Endothelial cell of umbilical vein (primary cell): ENCODE measurements at regions of chr6 and their contacts with region 1.

Region 1: DNA sequence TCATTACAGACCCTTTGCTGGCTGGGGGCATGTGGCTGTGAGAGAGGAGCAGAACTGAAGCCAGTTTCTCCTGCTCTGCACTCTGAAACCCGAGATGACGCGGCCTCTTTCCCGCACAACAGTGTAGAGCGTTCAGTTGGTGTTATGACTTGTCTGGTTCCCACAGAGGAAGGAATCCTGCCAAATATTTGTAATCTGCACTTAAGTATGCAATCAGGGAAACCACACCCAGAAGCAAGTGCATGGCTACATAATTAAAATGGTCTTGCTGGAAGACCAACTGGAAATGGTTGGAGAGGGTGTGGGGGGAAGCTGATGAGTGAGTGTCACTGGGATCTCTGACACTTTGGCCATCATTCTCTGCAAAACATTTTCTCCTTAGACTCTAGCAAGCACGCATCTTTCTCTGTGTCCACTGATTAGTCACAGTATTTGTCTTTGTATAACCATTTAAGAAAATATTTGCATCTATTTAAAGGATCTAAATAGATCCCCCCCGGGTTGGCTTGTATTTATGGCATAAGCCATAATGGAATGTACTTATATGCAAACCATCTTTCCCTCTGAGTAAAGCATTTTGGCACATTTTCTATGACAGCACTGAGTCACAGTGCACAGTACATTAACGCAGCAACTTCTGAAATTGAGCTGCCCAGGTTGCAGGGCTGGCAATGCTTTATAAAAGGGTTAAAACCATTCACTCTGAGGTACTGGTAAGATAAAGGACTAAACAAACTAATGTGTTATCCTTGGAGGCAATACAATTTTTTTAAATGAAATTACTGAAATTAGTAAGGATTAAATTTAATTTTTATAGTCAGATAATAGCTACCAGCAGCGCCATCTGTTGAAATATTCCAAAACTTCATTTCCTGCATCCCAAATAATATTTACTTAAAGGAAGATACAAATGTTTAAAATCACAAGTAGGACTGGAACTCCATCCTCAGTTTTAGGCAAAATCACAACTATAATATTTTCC is 76.7 kb downstream of the FOXC1 start:
- DNase-seq: peak; percentile 71
- H3K4me3 ChIP-seq: no peak overlapping the region
- H3K27ac ChIP-seq: no peak overlapping the region
- H3K4me1 ChIP-seq: peaks cover 13% of the 10 kb centered on the region
- H3K27me3 ChIP-seq: no peaks in the 10 kb centered on the region
- CTCF ChIP-seq: peak; percentile 12 to 26
- POLR2A ChIP-seq: no peak

Region 2: DNA sequence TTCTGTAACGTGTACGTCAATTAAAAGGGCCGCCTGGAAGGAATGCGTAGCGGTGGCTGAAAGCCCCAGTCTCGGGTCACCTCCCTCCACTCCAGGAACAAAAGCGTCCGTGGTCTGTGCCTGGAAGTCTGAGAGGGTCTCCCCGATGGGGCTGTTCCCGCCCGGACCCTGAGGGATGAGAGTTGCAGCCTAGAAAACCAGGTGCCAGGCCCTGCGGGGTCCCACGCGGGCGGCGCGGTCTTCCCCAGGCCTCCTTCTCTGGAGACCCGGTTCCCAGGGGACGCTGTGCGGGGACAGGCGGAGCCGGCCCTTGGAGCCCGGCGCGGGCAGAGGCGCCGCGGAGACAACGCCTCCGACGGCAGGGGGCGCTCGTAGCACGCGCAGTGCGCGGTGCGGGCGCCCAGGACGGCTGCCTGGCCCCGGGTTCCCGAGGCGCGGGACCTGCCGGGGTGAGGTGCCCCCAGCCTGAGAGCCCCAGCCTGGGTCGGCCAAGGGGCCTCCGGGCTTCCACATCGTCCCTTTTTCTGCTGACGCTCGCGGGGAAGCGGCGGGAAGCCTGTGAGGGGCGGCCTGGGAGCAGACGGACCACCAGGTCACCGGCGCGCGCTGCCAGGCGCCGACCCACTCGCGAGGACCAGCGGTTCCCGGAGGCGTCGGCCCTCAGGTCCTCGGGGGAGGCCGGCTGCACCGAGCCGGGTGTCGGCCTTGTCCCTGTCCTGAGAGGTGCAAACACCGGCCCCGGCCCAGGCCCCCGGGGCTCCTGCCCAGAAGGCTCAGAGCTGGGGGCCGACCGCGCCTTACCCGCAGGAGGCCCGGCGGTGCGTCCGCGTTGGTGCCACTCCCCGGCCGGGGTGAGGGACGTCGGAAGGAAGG is 82.0 kb before region 1 on chr6:
- CTCF ChIA-PET with region 1: interaction called, 28 read pairs
- POLR2A ChIA-PET with region 1: no interaction called
- dilution Hi-C with region 1: no loop called
- intact Hi-C with region 1: loop called (anchors 2 kb)
- DNase-seq: peak; percentile 63
- H3K4me3 ChIP-seq: peak overlapping the region; percentile 33 to 38 (median 36)
- H3K27ac ChIP-seq: no peak overlapping the region
- H3K4me1 ChIP-seq: peaks cover 3% of the 10 kb centered on the region
- H3K27me3 ChIP-seq: peaks cover 12 to 16% of the 10 kb centered on the region in 2 experiments
- CTCF ChIP-seq: peak; percentile 87 to 91
- POLR2A ChIP-seq: no peak

Region 3: GRCh38 chr6:1624851-1625781 is 61.3 kb before region 1 on chr6:
- CTCF ChIA-PET with region 1: interaction called, 22 read pairs
- POLR2A ChIA-PET with region 1: no interaction called
- dilution Hi-C with region 1: no loop called
- intact Hi-C with region 1: loop called (anchors 5 kb)
- DNase-seq: peak; percentile 73
- H3K4me3 ChIP-seq: peak overlapping the region; percentile 59 to 86 (median 69)
- H3K27ac ChIP-seq: peak overlapping the region; percentile 3
- H3K4me1 ChIP-seq: peaks cover 21% of the 10 kb centered on the region
- H3K27me3 ChIP-seq: peaks cover 5 to 15% of the 10 kb centered on the region in 2 experiments
- CTCF ChIP-seq: no peak
- POLR2A ChIP-seq: no peak

Region 4: GRCh38 chr6:1701668-1702353 is 15.4 kb after region 1 on chr6:
- CTCF ChIA-PET with region 1: interaction called, 54 read pairs
- POLR2A ChIA-PET with region 1: no interaction called
- dilution Hi-C with region 1: no loop called
- intact Hi-C with region 1: no loop called
- DNase-seq: no peak
- H3K4me3 ChIP-seq: no peak overlapping the region
- H3K27ac ChIP-seq: no peak overlapping the region
- H3K4me1 ChIP-seq: no peaks in the 10 kb centered on the region
- H3K27me3 ChIP-seq: no peaks in the 10 kb centered on the region
- CTCF ChIP-seq: no peak
- POLR2A ChIP-seq: no peak

Region 5: GRCh38 chr6:1724616-1725015 is 38.2 kb after region 1 on chr6:
- CTCF ChIA-PET with region 1: interaction called, 12 read pairs
- POLR2A ChIA-PET with region 1: no interaction called
- dilution Hi-C with region 1: no loop called
- intact Hi-C with region 1: no loop called
- DNase-seq: peak; percentile 64
- H3K4me3 ChIP-seq: no peak overlapping the region
- H3K27ac ChIP-seq: no peak overlapping the region
- H3K4me1 ChIP-seq: peaks cover 19% of the 10 kb centered on the region
- H3K27me3 ChIP-seq: no peaks in the 10 kb centered on the region
- CTCF ChIP-seq: no peak
- POLR2A ChIP-seq: no peak